Right lobe of liver (tissue), 6 donors: ENCODE measurements at regions of chr15 and their contacts with region 1.

Region 1: GRCh38 chr15:52584414-52584813 is 15.6 kb upstream of the ARPP19 start:
- DNase-seq: no peak
- ATAC-seq: no peak
- H3K4me3 ChIP-seq: no peak overlapping the region
- H3K27ac ChIP-seq: no peak overlapping the region
- H3K4me1 ChIP-seq: no peaks in the 10 kb centered on the region
- H3K27me3 ChIP-seq: no peaks in the 10 kb centered on the region
- CTCF ChIP-seq: no peak
- POLR2A ChIP-seq: no peak

Region 2: GRCh38 chr15:52642386-52643361 is 58.3 kb after region 1 on chr15:
- intact Hi-C with region 1: no loop called
- DNase-seq: no peak
- ATAC-seq: no peak
- H3K4me3 ChIP-seq: no peak overlapping the region
- H3K27ac ChIP-seq: no peak overlapping the region
- H3K4me1 ChIP-seq: peaks cover 0 to 5% (median 0%) of the 10 kb centered on the region in 4 donors
- H3K27me3 ChIP-seq: no peaks in the 10 kb centered on the region
- CTCF ChIP-seq: no peak
- POLR2A ChIP-seq: no peak

Region 3: GRCh38 chr15:52679232-52680040 is 95.0 kb after region 1 on chr15 and contains the start of gene ATOSA:
- intact Hi-C with region 1: loop called in 1 of 2 experiments (anchors 10 kb)
- DNase-seq: peak; percentile 94 to 96 (median 96)
- ATAC-seq: peak; percentile 87 to 91 (median 89)
- H3K4me3 ChIP-seq: peak within 1 kb of the TSS; percentile 81 to 85 (median 82)
- H3K27ac ChIP-seq: peak within 1 kb of the TSS; percentile 92 to 97 (median 95)
- H3K4me1 ChIP-seq: peaks cover 0 to 22% (median 1%) of the 10 kb centered on the region in 4 donors
- H3K27me3 ChIP-seq: no peaks in the 10 kb centered on the region
- CTCF ChIP-seq: no peak
- POLR2A ChIP-seq: peak; percentile 71
- total RNA-seq, gene ATOSA: 18.9 to 52.9 (median 35.4) TPM

Region 4: DNA sequence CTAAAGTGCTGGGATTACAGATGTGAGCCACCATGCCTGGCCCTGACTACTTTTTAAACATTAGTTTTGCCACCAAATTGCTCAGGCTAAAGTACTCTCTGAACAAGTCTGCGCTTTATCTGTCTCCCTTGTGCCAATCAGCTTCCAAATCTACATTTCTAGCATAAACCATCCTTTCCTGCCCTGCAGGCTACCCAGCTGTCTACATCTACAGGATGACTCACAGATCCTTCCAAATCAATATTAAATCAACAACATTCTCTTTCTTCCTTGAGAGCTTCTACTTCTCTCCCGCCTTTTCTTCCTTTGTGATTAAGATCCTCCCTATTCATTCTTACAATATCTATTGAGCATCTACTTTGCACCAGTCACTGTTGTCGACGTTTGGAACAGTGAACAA is 110.8 kb after region 1 on chr15:
- intact Hi-C with region 1: no loop called
- DNase-seq: no peak
- ATAC-seq: no peak
- H3K4me3 ChIP-seq: no peak overlapping the region
- H3K27ac ChIP-seq: no peak overlapping the region
- H3K4me1 ChIP-seq: no peaks in the 10 kb centered on the region
- H3K27me3 ChIP-seq: no peaks in the 10 kb centered on the region
- CTCF ChIP-seq: no peak
- POLR2A ChIP-seq: no peak